ENCODE measurements at regions of chr11 and their contacts with region 1.

Region 1: DNA sequence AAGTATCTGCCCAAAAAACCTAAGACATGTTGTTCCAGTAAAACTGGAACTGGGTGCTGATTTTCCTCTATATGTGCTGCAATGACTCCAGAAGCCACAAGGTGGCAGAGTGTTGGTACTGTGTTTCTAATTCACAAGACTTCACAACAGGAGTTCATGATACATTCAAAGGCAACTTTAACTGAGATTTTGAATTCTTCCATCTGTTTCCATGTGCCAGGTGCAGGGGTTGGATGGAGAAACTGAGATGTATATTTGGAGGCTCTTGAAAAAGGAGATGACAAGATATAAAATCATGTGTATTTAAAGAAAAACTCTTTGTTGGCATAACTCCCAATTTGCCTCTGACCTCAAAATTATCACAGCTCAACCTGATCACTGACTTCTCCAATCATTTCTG is 1098.6 kb upstream of the CCDC90B start:
- DNase-seq: no peak
- ATAC-seq: peak; percentile 53; the same call in 2 of the 3 replicates
- H3K4me3 ChIP-seq: no peak overlapping the region
- H3K27ac ChIP-seq: no peak overlapping the region
- H3K4me1 ChIP-seq: no peaks in the 10 kb centered on the region
- H3K27me3 ChIP-seq: no peaks in the 10 kb centered on the region
- CTCF ChIP-seq: peak; percentile 68 to 77 (median 75)
- EP300 ChIP-seq: no peak
- POLR2A ChIP-seq: no peak
- RAD21 ChIP-seq: peak; percentile 67

Region 2: DNA sequence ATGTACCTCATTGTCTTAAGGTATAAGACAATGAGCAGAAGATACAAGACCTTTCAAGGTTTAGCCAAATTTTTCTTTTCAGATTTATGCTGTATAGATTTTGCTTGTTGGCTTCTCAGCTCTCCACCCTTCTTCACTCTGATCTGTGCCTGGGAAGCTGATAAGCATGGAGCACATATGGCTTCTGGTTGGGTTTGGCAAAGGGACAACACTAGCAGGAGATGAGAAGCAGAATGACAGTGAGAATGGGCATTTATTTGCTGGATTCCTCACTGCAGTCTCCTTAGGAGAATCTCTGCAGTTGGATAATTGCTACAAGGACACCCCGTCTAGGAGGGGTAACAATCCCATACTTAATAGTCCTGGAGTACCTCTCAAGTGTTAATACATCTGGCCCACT is 623.8 kb before region 1 on chr11:
- CTCF ChIA-PET with region 1: no interaction called
- POLR2A ChIA-PET with region 1: no interaction called
- RAD21 ChIA-PET with region 1: no interaction called
- SMC1A ChIA-PET with region 1: no interaction called
- in situ Hi-C with region 1: no loop called
- intact Hi-C with region 1: no loop called
- DNase-seq: no peak
- ATAC-seq: no peak
- H3K4me3 ChIP-seq: no peak overlapping the region
- H3K27ac ChIP-seq: no peak overlapping the region
- H3K4me1 ChIP-seq: no peaks in the 10 kb centered on the region
- H3K27me3 ChIP-seq: no peaks in the 10 kb centered on the region
- CTCF ChIP-seq: no peak
- EP300 ChIP-seq: no peak
- POLR2A ChIP-seq: no peak
- RAD21 ChIP-seq: no peak

Region 3: GRCh38 chr11:84089072-84090057 is 295.4 kb before region 1 on chr11:
- CTCF ChIA-PET with region 1: no interaction called
- POLR2A ChIA-PET with region 1: no interaction called
- RAD21 ChIA-PET with region 1: no interaction called
- SMC1A ChIA-PET with region 1: no interaction called
- in situ Hi-C with region 1: no loop called
- intact Hi-C with region 1: no loop called
- DNase-seq: no peak
- ATAC-seq: no peak
- H3K4me3 ChIP-seq: no peak overlapping the region
- H3K27ac ChIP-seq: no peak overlapping the region
- H3K4me1 ChIP-seq: no peaks in the 10 kb centered on the region
- H3K27me3 ChIP-seq: no peaks in the 10 kb centered on the region
- CTCF ChIP-seq: no peak
- EP300 ChIP-seq: no peak
- POLR2A ChIP-seq: no peak
- RAD21 ChIP-seq: no peak

Region 4: DNA sequence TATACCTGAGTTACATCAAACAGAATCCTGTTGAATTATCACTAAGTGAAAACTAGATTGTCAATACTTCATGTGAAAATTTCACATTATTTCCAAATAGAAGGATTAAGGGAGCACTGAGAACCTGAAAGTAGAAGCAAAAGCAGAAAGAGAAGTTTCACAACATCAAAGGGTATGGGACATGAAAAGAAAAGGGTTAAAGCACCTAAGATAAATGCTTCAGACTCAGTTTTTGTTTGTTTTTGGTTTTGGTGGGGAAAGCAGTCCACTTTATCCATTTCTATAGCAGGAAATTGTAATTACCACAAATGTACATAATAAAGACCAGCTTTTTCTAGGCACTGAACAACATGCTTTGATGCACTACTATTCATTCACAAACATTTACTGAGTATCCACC is 28.8 kb before region 1 on chr11:
- CTCF ChIA-PET with region 1: no interaction called
- POLR2A ChIA-PET with region 1: no interaction called
- RAD21 ChIA-PET with region 1: no interaction called
- SMC1A ChIA-PET with region 1: no interaction called
- in situ Hi-C with region 1: no loop called
- intact Hi-C with region 1: no loop called
- DNase-seq: no peak
- ATAC-seq: no peak
- H3K4me3 ChIP-seq: no peak overlapping the region
- H3K27ac ChIP-seq: no peak overlapping the region
- H3K4me1 ChIP-seq: no peaks in the 10 kb centered on the region
- H3K27me3 ChIP-seq: no peaks in the 10 kb centered on the region
- CTCF ChIP-seq: no peak
- EP300 ChIP-seq: no peak
- POLR2A ChIP-seq: no peak
- RAD21 ChIP-seq: no peak

Region 5: DNA sequence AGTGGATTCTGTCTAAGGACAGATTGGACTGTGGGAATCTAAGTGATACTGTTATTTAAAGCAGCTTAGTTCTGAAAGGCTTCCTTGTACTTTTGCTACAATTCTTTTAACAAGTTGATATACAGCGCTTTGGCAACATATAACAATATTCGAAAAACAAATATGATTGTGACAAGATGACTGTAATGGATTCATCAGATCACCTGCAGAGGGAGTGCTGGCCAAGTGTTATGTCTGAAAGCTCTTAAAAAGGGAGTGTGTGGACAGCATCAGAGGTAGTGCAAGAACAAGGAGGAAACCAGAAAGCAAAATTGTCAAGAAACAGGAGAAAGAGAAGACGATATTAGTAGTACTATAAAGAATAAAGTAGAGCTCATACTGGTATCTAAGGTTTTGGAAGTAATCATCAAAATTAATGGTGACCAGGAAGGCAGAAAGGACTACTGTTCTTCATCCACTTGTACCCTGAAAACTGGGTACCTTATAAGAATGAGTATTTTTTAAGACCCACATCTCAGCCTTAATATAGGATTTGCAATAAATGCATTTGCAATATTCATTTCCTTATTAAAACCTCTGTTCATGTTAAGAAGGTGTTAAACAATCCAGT is 13.4 kb after region 1 on chr11:
- CTCF ChIA-PET with region 1: interaction called, 13 read pairs
- POLR2A ChIA-PET with region 1: no interaction called
- RAD21 ChIA-PET with region 1: no interaction called
- SMC1A ChIA-PET with region 1: interaction called, 5 read pairs
- in situ Hi-C with region 1: no loop called
- intact Hi-C with region 1: no loop called
- DNase-seq: no peak
- ATAC-seq: peak; percentile 44; the same call in 1 of the 3 replicates
- H3K4me3 ChIP-seq: no peak overlapping the region
- H3K27ac ChIP-seq: no peak overlapping the region
- H3K4me1 ChIP-seq: no peaks in the 10 kb centered on the region
- H3K27me3 ChIP-seq: no peaks in the 10 kb centered on the region; a peak in 1 of 4 replicates
- CTCF ChIP-seq: peak; percentile 18 to 33 (median 27); a peak in 3 of 6 replicates
- EP300 ChIP-seq: no peak
- POLR2A ChIP-seq: no peak
- RAD21 ChIP-seq: 0 out of 2 replicates have a peak, but pooled peaks have one; percentile 23

Region 6: DNA sequence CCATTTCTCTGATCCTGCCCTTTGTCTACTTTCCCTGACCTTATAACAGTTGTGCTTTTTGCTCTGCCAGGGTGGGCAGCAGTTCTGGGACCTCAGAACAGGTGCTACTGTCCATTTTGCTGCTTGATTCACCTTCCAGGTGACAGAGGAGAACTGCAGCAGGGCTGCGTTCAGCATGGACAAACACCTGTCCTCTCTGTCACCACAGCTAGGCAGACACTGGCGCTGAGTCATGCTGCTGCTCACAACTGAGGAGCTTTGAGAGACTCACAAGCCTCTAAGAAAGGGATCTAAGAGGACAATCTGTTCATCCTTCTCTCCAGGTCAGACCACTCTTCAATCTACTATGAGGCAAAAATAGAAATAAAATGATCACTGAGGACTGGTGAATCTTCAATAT is 45.9 kb after region 1 on chr11:
- CTCF ChIA-PET with region 1: no interaction called
- POLR2A ChIA-PET with region 1: no interaction called
- RAD21 ChIA-PET with region 1: no interaction called
- SMC1A ChIA-PET with region 1: no interaction called
- in situ Hi-C with region 1: no loop called
- intact Hi-C with region 1: no loop called
- DNase-seq: no peak
- ATAC-seq: no peak
- H3K4me3 ChIP-seq: no peak overlapping the region
- H3K27ac ChIP-seq: no peak overlapping the region
- H3K4me1 ChIP-seq: no peaks in the 10 kb centered on the region
- H3K27me3 ChIP-seq: no peaks in the 10 kb centered on the region; a peak in 1 of 4 replicates
- CTCF ChIP-seq: no peak
- EP300 ChIP-seq: no peak
- POLR2A ChIP-seq: no peak
- RAD21 ChIP-seq: no peak

Region 7: DNA sequence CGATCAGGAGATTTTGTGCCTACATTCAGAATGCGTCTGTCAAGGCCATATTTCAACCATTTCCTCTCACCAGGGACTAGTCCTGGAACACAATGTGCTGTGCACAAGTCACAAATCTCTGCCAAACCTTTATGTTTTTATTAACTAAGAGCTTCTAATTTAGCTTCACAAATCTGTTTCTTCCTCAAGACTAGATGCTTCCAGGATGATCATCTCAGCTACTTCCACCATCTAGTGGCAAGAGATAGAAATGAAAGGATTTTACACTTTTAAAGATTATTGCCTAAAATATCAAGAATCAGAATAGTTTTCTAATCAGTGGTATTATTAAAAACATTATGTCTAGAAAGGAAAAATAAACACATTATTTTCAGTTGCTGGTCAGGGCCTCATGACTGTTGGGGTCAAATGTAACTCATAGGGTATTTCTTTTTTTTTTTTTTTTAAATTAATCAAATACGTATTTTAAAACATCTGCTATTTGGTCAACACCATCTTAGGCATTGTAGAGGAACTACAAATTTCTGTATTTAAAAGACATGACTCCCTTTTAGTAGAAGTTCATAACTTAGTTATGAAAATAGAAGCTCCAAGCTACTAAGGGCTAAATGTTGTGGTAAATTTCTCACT is 139.8 kb after region 1 on chr11:
- CTCF ChIA-PET with region 1: interaction called, 9 read pairs
- POLR2A ChIA-PET with region 1: no interaction called
- RAD21 ChIA-PET with region 1: interaction called, 4 read pairs
- SMC1A ChIA-PET with region 1: interaction called, 3 read pairs
- in situ Hi-C with region 1: no loop called
- intact Hi-C with region 1: loop called (anchors 2 kb)
- DNase-seq: no peak
- ATAC-seq: no peak
- H3K4me3 ChIP-seq: no peak overlapping the region
- H3K27ac ChIP-seq: no peak overlapping the region
- H3K4me1 ChIP-seq: no peaks in the 10 kb centered on the region
- H3K27me3 ChIP-seq: no peaks in the 10 kb centered on the region
- CTCF ChIP-seq: peak in 2 of 3 experiments; percentile 29 to 31; a peak in 3 of 6 replicates
- EP300 ChIP-seq: no peak
- POLR2A ChIP-seq: no peak
- RAD21 ChIP-seq: peak; percentile 54

Measured in GM12878 (cell line).